Uterus (tissue), 4 donors: ENCODE measurements at regions of chr10 and their contacts with region 1.

Region 1: GRCh38 chr10:44857363-44858016 is 53.6 kb upstream of the TMEM72 start:
- DNase-seq: peak; percentile 59 to 74
- H3K4me3 ChIP-seq: no peak overlapping the region
- H3K27ac ChIP-seq: no peak overlapping the region
- H3K4me1 ChIP-seq: no peaks in the 10 kb centered on the region
- H3K27me3 ChIP-seq: no peaks in the 10 kb centered on the region
- CTCF ChIP-seq: peak; percentile 87 to 98 (median 96)
- POLR2A ChIP-seq: no peak

Region 2: DNA sequence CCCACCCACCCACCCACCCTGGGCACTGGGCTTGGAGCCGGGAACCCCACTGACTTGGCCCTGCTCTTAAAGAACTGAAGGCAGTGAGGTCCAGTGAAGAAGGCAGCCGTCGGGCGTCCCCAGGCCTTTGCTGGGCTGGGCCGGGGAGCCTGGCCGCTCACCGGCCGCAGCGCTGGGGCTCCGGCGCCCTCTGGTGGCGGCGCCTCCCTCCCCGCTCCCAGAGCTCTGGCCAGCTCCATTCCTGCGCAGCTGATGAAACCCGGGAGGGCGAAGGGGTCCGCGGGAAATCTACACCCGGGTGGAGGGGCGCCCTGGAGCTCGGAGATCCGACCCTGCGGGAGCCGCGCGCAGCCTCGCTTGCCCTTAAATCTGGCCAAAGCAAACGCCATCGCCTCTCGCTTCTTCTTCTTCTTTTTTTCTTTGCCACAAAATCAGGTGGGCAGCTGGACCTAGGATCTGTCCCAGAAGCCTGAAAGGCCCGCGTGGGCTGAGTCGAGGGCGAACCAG is 470.9 kb before region 1 on chr10:
- intact Hi-C with region 1: loop called (anchors 10 kb)
- DNase-seq: peak; percentile 68 to 78
- H3K4me3 ChIP-seq: peak overlapping the region in 1 of 2 donors; percentile 5
- H3K27ac ChIP-seq: peak overlapping the region; percentile 85 to 88
- H3K4me1 ChIP-seq: peaks cover 0 to 10% of the 10 kb centered on the region in 2 donors
- H3K27me3 ChIP-seq: no peaks in the 10 kb centered on the region
- CTCF ChIP-seq: peak; percentile 90 to 97 (median 94)
- POLR2A ChIP-seq: peak in 1 of 2 donors; percentile 21

Region 3: DNA sequence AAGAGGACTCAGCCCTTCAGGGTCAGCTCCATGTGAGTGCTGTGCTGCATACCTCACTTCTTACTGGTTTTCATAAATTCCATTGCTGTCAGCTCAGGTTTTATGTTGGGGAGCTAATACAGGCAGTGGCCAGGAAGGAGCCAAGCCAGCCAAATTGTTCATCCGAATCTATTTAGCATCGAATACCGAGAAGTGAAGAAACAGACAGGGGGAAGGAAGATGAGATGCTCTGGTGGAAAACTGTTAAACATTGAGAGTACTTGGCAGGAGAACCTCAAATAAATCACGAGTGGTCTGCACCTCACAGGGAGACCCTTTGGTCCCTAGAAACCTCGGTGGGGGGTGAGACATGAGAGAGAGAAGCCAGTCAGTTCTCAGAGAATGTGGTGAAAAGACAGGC is 142.4 kb before region 1 on chr10:
- intact Hi-C with region 1: no loop called
- DNase-seq: no peak
- H3K4me3 ChIP-seq: no peak overlapping the region
- H3K27ac ChIP-seq: no peak overlapping the region
- H3K4me1 ChIP-seq: no peaks in the 10 kb centered on the region
- H3K27me3 ChIP-seq: no peaks in the 10 kb centered on the region
- CTCF ChIP-seq: no peak
- POLR2A ChIP-seq: no peak

Region 4: DNA sequence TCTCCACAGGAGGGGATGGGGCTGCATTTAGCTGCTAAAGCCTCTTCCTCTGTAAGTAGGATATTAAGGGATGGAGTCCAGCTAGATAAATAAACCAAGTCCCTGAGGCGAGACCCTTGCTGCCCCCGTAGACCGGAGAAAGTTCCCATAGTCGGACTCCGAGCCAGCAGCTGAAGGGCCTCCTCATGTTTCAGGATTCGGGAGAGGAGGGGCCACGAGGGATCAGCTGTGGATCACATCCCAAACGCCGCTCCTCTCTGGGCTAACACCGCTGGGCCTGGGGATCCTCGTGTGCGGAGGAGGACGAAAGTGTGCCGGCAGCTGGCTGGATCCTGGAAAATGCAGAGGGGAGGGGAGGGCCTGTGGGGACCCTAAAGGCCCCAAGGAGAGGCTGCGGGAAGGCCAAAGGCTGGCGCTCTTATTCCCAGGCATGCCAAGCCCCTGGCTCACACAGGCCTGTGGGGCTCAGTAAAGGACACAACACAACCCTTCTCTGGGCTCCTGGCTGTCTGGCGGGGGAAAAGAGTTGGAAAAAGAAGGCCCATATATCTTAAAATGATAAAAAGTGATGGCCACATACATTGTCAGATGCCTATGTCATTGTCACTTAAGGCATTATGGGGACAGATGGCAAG is 28.9 kb before region 1 on chr10:
- intact Hi-C with region 1: no loop called
- DNase-seq: peak in 1 of 2 donors; percentile 48
- H3K4me3 ChIP-seq: no peak overlapping the region
- H3K27ac ChIP-seq: peak overlapping the region in 1 of 2 donors; percentile 21
- H3K4me1 ChIP-seq: peaks cover 0 to 9% of the 10 kb centered on the region in 2 donors
- H3K27me3 ChIP-seq: no peaks in the 10 kb centered on the region
- CTCF ChIP-seq: no peak
- POLR2A ChIP-seq: no peak